Activated CD4-positive, alpha-beta T cell treated with anti-CD3 and anti-CD28 coated beads for 36 hours (primary cell): ENCODE measurements at regions of chr4 and their contacts with region 1.

Region 1: DNA sequence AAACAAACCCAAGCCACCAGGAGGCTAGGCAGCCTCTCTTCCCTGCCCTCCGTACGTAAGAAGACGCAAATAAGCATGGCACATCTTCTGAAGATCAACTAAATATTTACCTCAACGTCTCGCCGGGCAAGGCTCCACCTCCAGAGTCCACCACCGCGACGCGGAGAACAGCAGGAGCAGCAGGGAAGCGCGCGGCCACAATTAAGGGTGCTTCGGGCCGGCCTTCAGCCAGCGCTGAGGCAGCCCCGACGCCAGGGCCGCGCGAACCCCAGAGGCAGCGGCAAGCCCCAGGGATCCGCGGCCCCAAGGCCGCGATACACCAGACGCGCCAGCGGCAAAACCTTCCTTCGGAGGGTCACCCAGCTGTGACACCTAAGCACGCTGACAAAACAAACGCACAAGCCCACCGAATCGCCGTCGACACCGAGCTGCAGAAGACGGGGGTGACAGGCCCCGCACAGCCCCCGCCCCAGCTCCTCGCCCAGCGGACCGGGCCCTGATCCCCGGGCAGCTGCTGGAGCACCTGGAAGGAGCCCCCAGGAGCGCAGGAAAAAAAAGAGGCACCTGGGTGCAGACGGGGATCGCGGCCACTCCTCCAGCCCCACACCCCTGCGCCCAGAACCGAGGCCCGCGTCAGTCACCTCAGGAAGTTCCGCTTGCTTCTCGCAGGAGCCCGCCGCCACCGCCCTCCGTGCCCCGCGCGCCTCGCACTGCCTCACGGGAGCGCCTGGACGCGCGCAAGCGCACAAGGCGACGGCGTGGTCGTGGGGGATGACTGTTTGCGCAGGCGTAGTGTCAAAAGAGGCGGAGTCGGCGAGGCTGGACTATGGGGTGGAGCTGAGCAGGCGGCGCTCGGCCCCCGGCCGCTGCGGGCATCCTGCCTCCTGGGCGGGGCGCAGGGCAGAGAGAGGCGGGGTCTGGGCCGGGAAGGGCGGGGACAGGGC is at the starts of genes HAUS3 and POLN:
- DNase-seq: peak; percentile 99
- ATAC-seq: peak; percentile 97
- H3K4me3 Mint-ChIP-seq: peak within 1 kb of the TSS; percentile 91
- H3K27ac Mint-ChIP-seq: peak within 1 kb of the TSS; percentile 88
- H3K4me1 Mint-ChIP-seq: peaks cover 54% of the 10 kb centered on the region
- H3K27me3 Mint-ChIP-seq: no peaks in the 10 kb centered on the region
- total RNA-seq, gene HAUS3: 14.6 to 18.6 TPM
- total RNA-seq, gene POLN: 2.3 to 3.2 TPM

Region 2: GRCh38 chr4:1856042-1856788 is 385.5 kb before region 1 on chr4 and contains the start of gene LETM1:
- CTCF ChIA-PET with region 1: no interaction called
- POLR2A ChIA-PET with region 1: no interaction called
- intact Hi-C with region 1: loop called in 1 of 2 experiments (anchors 1 kb)
- DNase-seq: peak; percentile 97
- ATAC-seq: peak; percentile 99
- H3K4me3 Mint-ChIP-seq: peak within 1 kb of the TSS; percentile 78
- H3K27ac Mint-ChIP-seq: peak within 1 kb of the TSS; percentile 55
- H3K4me1 Mint-ChIP-seq: peaks cover 40% of the 10 kb centered on the region
- H3K27me3 Mint-ChIP-seq: no peaks in the 10 kb centered on the region
- total RNA-seq, gene LETM1: 41.6 to 51.3 TPM

Region 3: GRCh38 chr4:2194496-2194895 is 47.2 kb before region 1 on chr4:
- CTCF ChIA-PET with region 1: no interaction called
- POLR2A ChIA-PET with region 1: no interaction called
- intact Hi-C with region 1: no loop called
- DNase-seq: no peak
- ATAC-seq: no peak
- H3K4me3 Mint-ChIP-seq: no peak overlapping the region
- H3K27ac Mint-ChIP-seq: no peak overlapping the region
- H3K4me1 Mint-ChIP-seq: no peaks in the 10 kb centered on the region
- H3K27me3 Mint-ChIP-seq: no peaks in the 10 kb centered on the region

Region 4: GRCh38 chr4:2220016-2220630 is 21.6 kb before region 1 on chr4:
- CTCF ChIA-PET with region 1: interaction called, 25 read pairs
- POLR2A ChIA-PET with region 1: interaction called, 6 read pairs
- intact Hi-C with region 1: no loop called
- DNase-seq: peak; percentile 88
- ATAC-seq: peak; percentile 95
- H3K4me3 Mint-ChIP-seq: no peak overlapping the region
- H3K27ac Mint-ChIP-seq: no peak overlapping the region
- H3K4me1 Mint-ChIP-seq: no peaks in the 10 kb centered on the region
- H3K27me3 Mint-ChIP-seq: no peaks in the 10 kb centered on the region

Region 5: DNA sequence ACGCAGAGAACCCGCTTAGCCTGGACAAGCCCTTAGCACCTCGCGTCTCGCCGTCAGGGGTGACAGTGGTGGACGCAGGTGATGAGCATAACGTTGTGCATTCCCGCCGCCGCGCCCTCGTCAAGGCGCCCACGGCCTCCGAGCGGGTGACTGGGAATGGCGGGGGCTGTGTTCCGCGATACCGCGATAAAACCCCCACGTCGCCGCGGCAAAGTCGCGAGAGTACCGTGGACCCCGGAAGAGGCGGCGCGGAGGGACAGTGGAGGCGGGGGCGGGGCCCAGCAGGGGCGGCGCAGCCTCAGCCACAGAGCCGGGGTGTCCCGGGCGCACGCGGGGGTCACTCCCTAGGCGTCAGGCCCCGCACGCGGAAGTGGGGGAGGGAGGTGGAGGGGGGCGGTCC is 123.0 kb after region 1 on chr4:
- CTCF ChIA-PET with region 1: no interaction called
- POLR2A ChIA-PET with region 1: no interaction called
- intact Hi-C with region 1: loop called in 1 of 2 experiments (anchors 1 kb)
- DNase-seq: peak; percentile 80
- ATAC-seq: peak; percentile 86
- H3K4me3 Mint-ChIP-seq: peak overlapping the region; percentile 61
- H3K27ac Mint-ChIP-seq: peak overlapping the region; percentile 25
- H3K4me1 Mint-ChIP-seq: peaks cover 4% of the 10 kb centered on the region
- H3K27me3 Mint-ChIP-seq: no peaks in the 10 kb centered on the region

Region 6: GRCh38 chr4:2418650-2419571 is 177.2 kb after region 1 on chr4 and contains the start of gene CFAP99:
- CTCF ChIA-PET with region 1: interaction called, 3 read pairs
- POLR2A ChIA-PET with region 1: no interaction called
- intact Hi-C with region 1: loop called (anchors 1 kb)
- DNase-seq: peak; percentile 99
- ATAC-seq: peak; percentile 93
- H3K4me3 Mint-ChIP-seq: peak within 1 kb of the TSS; percentile 82
- H3K27ac Mint-ChIP-seq: peak within 1 kb of the TSS; percentile 68
- H3K4me1 Mint-ChIP-seq: peaks cover 39% of the 10 kb centered on the region
- H3K27me3 Mint-ChIP-seq: peaks cover 27% of the 10 kb centered on the region
- total RNA-seq, gene CFAP99: 0.05 TPM in 1 of 2 experiments, not detected in the other

Region 7: GRCh38 chr4:2843263-2843940 is 601.7 kb after region 1 on chr4 and contains the start of gene ADD1:
- CTCF ChIA-PET with region 1: no interaction called
- POLR2A ChIA-PET with region 1: no interaction called
- intact Hi-C with region 1: loop called in 1 of 2 experiments (anchors 5 kb)
- DNase-seq: peak; percentile 94
- ATAC-seq: peak; percentile 88
- H3K4me3 Mint-ChIP-seq: peak within 1 kb of the TSS; percentile 88
- H3K27ac Mint-ChIP-seq: peak within 1 kb of the TSS; percentile 89
- H3K4me1 Mint-ChIP-seq: peaks cover 56% of the 10 kb centered on the region
- H3K27me3 Mint-ChIP-seq: no peaks in the 10 kb centered on the region
- total RNA-seq, gene ADD1: 196 to 206 TPM